HepG2 (cell line): ENCODE measurements at regions of chr2 and their contacts with region 1.

Region 1: DNA sequence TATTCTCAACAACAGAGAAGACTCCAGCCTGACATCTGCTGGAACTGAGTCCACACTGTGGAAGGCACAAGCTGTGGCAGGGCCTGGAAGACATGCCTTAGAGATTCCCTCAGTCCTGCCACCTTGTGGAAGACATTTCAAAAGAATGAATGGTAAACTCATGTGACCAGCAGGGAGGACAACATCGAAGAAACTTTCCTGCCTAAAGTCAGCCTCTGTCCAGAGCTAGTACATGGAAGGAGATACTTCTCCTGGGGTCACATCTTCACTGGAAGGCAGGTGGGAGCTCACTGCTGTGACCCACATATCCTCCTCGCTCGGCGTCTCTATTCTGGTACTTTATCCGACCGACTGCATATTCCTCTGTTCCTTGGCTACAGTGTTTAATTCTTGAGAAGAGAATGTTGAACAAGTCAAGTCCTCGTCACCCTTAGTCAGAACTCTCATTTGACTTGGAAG is 59.5 kb downstream of the PUM2 start:
- DNase-seq: peak; percentile 89
- ATAC-seq: peak; percentile 100
- H3K4me3 ChIP-seq: no peak overlapping the region
- H3K27ac ChIP-seq: peak overlapping the region; percentile 13
- H3K4me1 ChIP-seq: peaks cover 5% of the 10 kb centered on the region; the same call in 1 of the 2 replicates
- H3K27me3 ChIP-seq: no peaks in the 10 kb centered on the region
- CTCF ChIP-seq: peak; percentile 89
- EP300 ChIP-seq: no peak
- POLR2A ChIP-seq: no peak
- RAD21 ChIP-seq: peak; percentile 73

Region 2: GRCh38 chr2:20103514-20104112 is 187.5 kb before region 1 on chr2:
- CTCF ChIA-PET with region 1: interaction called, 8 read pairs
- POLR2A ChIA-PET with region 1: no interaction called
- in situ Hi-C with region 1: no loop called
- intact Hi-C with region 1: loop called (anchors 1 kb)
- DNase-seq: peak; percentile 65
- ATAC-seq: peak; percentile 65
- H3K4me3 ChIP-seq: no peak overlapping the region
- H3K27ac ChIP-seq: no peak overlapping the region
- H3K4me1 ChIP-seq: peaks cover 46% of the 10 kb centered on the region
- H3K27me3 ChIP-seq: no peaks in the 10 kb centered on the region
- CTCF ChIP-seq: peak; percentile 75
- EP300 ChIP-seq: no peak
- POLR2A ChIP-seq: no peak
- RAD21 ChIP-seq: peak; percentile 74

Region 3: GRCh38 chr2:20516646-20517341 is 225.7 kb after region 1 on chr2:
- CTCF ChIA-PET with region 1: no interaction called
- POLR2A ChIA-PET with region 1: no interaction called
- in situ Hi-C with region 1: no loop called
- intact Hi-C with region 1: no loop called
- DNase-seq: peak; percentile 58
- ATAC-seq: peak; percentile 60
- H3K4me3 ChIP-seq: no peak overlapping the region
- H3K27ac ChIP-seq: no peak overlapping the region
- H3K4me1 ChIP-seq: peaks cover 42% of the 10 kb centered on the region
- H3K27me3 ChIP-seq: no peaks in the 10 kb centered on the region; a peak in 1 of 5 replicates
- CTCF ChIP-seq: no peak
- EP300 ChIP-seq: peak in 1 of 2 experiments; percentile 41; a peak in 2 of 4 replicates
- POLR2A ChIP-seq: no peak
- RAD21 ChIP-seq: no peak